ENCODE measurements at regions of chr16 and their contacts with region 1.

Region 1: DNA sequence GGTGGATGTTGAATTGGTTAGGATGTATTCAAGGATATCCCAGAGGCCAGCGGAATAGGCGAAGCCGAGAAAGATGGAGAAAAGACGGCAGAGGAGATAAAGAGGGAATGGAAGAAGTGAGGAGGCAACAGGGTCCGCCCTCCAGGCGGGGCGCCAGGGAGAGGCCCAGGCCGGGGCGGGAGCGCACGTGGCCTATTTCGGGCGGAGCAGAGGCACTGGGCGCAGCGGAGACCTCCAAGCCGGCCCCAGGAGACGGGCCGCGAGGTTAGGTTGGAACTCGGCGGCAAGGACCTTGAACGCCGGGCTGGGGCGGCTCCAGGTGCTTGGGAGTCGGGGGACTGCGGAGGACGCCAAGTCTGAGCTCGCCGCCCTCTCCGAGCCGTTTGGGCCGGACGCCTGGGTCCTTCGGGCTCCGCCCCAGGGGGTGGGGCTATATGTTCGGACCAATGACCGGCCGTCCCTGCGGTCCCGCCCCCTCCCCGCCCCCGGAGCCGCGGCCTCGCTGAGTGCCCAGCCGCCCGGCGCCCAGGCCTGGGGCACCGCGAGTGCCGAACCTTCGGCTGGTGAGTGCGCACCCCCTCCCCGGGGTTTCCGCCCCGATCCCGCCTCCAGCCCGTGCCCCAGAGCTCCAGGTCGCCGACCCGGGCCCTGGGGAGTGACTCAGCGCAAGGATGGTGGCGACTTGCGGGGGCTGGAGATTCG is at the start of gene ZNF771:
- DNase-seq: peak; percentile 84
- ATAC-seq: peak; percentile 88
- H3K4me3 ChIP-seq: peak within 1 kb of the TSS; percentile 87 to 96 (median 91)
- H3K27ac ChIP-seq: peak within 1 kb of the TSS; percentile 85
- H3K4me1 ChIP-seq: peaks cover 39% of the 10 kb centered on the region
- H3K27me3 ChIP-seq: no peaks in the 10 kb centered on the region
- CTCF ChIP-seq: peak; percentile 54
- EP300 ChIP-seq: no peak
- POLR2A ChIP-seq: peak; percentile 91 to 92
- RAD21 ChIP-seq: peak; percentile 75
- total RNA-seq, gene ZNF771: 10.9 and 11.8 TPM in 2 replicates

Region 2: GRCh38 chr16:30335598-30336474 is 71.4 kb before region 1 on chr16:
- CTCF ChIA-PET with region 1: no interaction called
- POLR2A ChIA-PET with region 1: interaction called, 20 read pairs
- in situ Hi-C with region 1: no loop called
- intact Hi-C with region 1: no loop called
- DNase-seq: peak; percentile 96
- ATAC-seq: peak; percentile 80
- H3K4me3 ChIP-seq: peak overlapping the region; percentile 68 to 95 (median 94)
- H3K27ac ChIP-seq: peak overlapping the region; percentile 99
- H3K4me1 ChIP-seq: peaks cover 51% of the 10 kb centered on the region
- H3K27me3 ChIP-seq: no peaks in the 10 kb centered on the region
- CTCF ChIP-seq: peak; percentile 56
- EP300 ChIP-seq: peak; percentile 71 to 73; a peak in 3 of 4 replicates
- POLR2A ChIP-seq: peak; percentile 76 to 84
- RAD21 ChIP-seq: no peak

Region 3: DNA sequence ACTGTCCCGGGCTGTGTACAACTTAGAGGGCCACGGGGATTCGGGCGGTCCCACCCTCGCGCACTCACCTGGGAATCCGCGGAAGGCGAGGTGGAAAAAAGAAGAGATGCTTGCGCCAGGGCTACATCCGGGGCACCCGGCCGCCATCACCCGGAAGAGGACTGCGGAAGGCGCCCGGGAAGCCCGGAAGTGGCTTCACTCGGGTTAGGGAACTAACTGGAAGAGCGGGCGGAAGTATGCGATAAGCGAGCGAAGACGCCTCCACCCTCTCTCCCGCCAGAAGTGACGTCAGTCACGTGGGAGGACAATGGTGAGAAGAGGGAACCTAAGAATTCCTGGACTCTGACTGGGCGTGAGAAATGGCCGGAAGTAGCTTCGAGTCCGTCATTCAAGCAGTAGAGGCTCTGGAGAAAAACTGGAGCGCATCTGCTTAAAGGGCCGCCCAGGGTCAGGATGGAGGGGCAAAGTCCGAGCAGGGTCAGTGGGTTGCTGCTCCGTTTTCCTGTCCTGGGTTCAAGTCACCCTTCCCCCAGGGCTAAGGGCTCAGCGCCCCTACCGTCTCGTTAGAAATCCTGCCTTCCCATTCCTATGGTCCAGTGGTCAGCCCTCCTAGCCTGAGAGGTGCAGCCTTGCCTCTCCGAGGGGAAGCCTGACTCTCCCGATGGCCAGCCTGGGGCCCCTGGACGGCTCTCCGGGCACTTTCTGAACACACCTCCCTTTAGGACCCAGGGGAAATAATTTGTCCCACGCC is 51.9 kb before region 1 on chr16 and contains the start of gene CD2BP2:
- CTCF ChIA-PET with region 1: interaction called, 10 read pairs
- POLR2A ChIA-PET with region 1: interaction called, 36 read pairs
- in situ Hi-C with region 1: no loop called
- intact Hi-C with region 1: loop called (anchors 2 kb)
- DNase-seq: peak; percentile 100
- ATAC-seq: peak; percentile 82
- H3K4me3 ChIP-seq: peak within 1 kb of the TSS; percentile 85 to 94 (median 88)
- H3K27ac ChIP-seq: peak within 1 kb of the TSS; percentile 92
- H3K4me1 ChIP-seq: peaks cover 58% of the 10 kb centered on the region
- H3K27me3 ChIP-seq: no peaks in the 10 kb centered on the region; a peak in 1 of 5 replicates
- CTCF ChIP-seq: peak; percentile 45
- EP300 ChIP-seq: peak; percentile 14 to 37; a peak in 1 of 4 replicates
- POLR2A ChIP-seq: peak; percentile 58 to 60; a peak in 2 of 4 replicates
- RAD21 ChIP-seq: peak; percentile 55; the same call in 1 of the 2 replicates
- total RNA-seq, gene CD2BP2: 54.6 and 69.9 TPM in 2 replicates

Region 4: GRCh38 chr16:30370444-30371247 is 36.6 kb before region 1 on chr16 and contains the start of gene TBC1D10B:
- CTCF ChIA-PET with region 1: interaction called, 3 read pairs
- POLR2A ChIA-PET with region 1: interaction called, 41 read pairs
- in situ Hi-C with region 1: no loop called
- intact Hi-C with region 1: loop called (anchors 1 kb)
- DNase-seq: peak; percentile 100
- ATAC-seq: peak; percentile 88
- H3K4me3 ChIP-seq: peak within 1 kb of the TSS; percentile 80 to 90 (median 86)
- H3K27ac ChIP-seq: peak within 1 kb of the TSS; percentile 51
- H3K4me1 ChIP-seq: peaks cover 45% of the 10 kb centered on the region
- H3K27me3 ChIP-seq: no peaks in the 10 kb centered on the region; a peak in 1 of 5 replicates
- CTCF ChIP-seq: peak; percentile 75
- EP300 ChIP-seq: no peak
- POLR2A ChIP-seq: peak; percentile 40 to 77; a peak in 2 of 4 replicates
- RAD21 ChIP-seq: peak; percentile 71; the same call in 1 of the 2 replicates
- total RNA-seq, gene TBC1D10B: 20.8 and 24.8 TPM in 2 replicates

Region 5: GRCh38 chr16:30395155-30395991 is 11.9 kb before region 1 on chr16 and contains the start of gene ZNF48:
- CTCF ChIA-PET with region 1: interaction called, 20 read pairs
- POLR2A ChIA-PET with region 1: interaction called, 70 read pairs
- in situ Hi-C with region 1: no loop called
- intact Hi-C with region 1: loop called (anchors 1 kb)
- DNase-seq: peak; percentile 89
- ATAC-seq: peak; percentile 94
- H3K4me3 ChIP-seq: peak within 1 kb of the TSS; percentile 75 to 93 (median 75)
- H3K27ac ChIP-seq: peak within 1 kb of the TSS; percentile 73
- H3K4me1 ChIP-seq: peaks cover 36% of the 10 kb centered on the region
- H3K27me3 ChIP-seq: no peaks in the 10 kb centered on the region
- CTCF ChIP-seq: peak; percentile 78
- EP300 ChIP-seq: 0 out of 4 replicates have a peak, but pooled peaks of 1 of the 2 experiments have one; percentile 19
- POLR2A ChIP-seq: peak in 1 of 2 experiments; percentile 70; a peak in 3 of 4 replicates
- RAD21 ChIP-seq: peak; percentile 92
- total RNA-seq, gene ZNF48: 10.9 and 12.3 TPM in 2 replicates

Region 6: GRCh38 chr16:30445408-30446202 is 38.4 kb after region 1 on chr16 and contains the start of gene SEPHS2:
- CTCF ChIA-PET with region 1: no interaction called
- POLR2A ChIA-PET with region 1: interaction called, 12 read pairs
- in situ Hi-C with region 1: no loop called
- intact Hi-C with region 1: no loop called
- DNase-seq: peak; percentile 97
- ATAC-seq: peak; percentile 52
- H3K4me3 ChIP-seq: peak within 1 kb of the TSS; percentile 86 to 92 (median 91)
- H3K27ac ChIP-seq: peak within 1 kb of the TSS; percentile 95
- H3K4me1 ChIP-seq: peaks cover 94% of the 10 kb centered on the region
- H3K27me3 ChIP-seq: no peaks in the 10 kb centered on the region; a peak in 1 of 5 replicates
- CTCF ChIP-seq: peak; percentile 55
- EP300 ChIP-seq: peak in 1 of 2 experiments; percentile 41; a peak in 1 of 4 replicates
- POLR2A ChIP-seq: peak; percentile 92 to 100
- RAD21 ChIP-seq: peak; percentile 46
- total RNA-seq, gene SEPHS2: 20.7 and 56.3 TPM in 2 replicates

Region 7: GRCh38 chr16:30526823-30527635 is 119.8 kb after region 1 on chr16:
- CTCF ChIA-PET with region 1: no interaction called
- POLR2A ChIA-PET with region 1: interaction called, 12 read pairs
- in situ Hi-C with region 1: no loop called
- intact Hi-C with region 1: no loop called
- DNase-seq: peak; percentile 97
- ATAC-seq: peak; percentile 89
- H3K4me3 ChIP-seq: peak overlapping the region; percentile 78 to 97 (median 87)
- H3K27ac ChIP-seq: peak overlapping the region; percentile 98
- H3K4me1 ChIP-seq: peaks cover 61% of the 10 kb centered on the region
- H3K27me3 ChIP-seq: no peaks in the 10 kb centered on the region; a peak in 1 of 5 replicates
- CTCF ChIP-seq: peak; percentile 54
- EP300 ChIP-seq: peak in 1 of 2 experiments; percentile 31; a peak in 1 of 4 replicates
- POLR2A ChIP-seq: peak; percentile 70 to 76
- RAD21 ChIP-seq: peak; percentile 75

Measured in HepG2 (cell line).